ENCODE measurements at regions of chr10 and their contacts with region 1.

Region 1: GRCh38 chr10:71608819-71609768 is 110.5 kb downstream of the C10orf105 start:
- DNase-seq: peak; percentile 61
- H3K4me3 Mint-ChIP-seq: no peak overlapping the region
- H3K27ac Mint-ChIP-seq: no peak overlapping the region
- H3K4me1 Mint-ChIP-seq: peaks cover 6% of the 10 kb centered on the region
- H3K27me3 Mint-ChIP-seq: peaks cover 57% of the 10 kb centered on the region
- CTCF ChIP-seq: peak; percentile 78

Region 2: GRCh38 chr10:71620642-71621041 is 11.5 kb after region 1 on chr10:
- CTCF ChIA-PET with region 1: interaction called, 14 read pairs
- POLR2A ChIA-PET with region 1: no interaction called
- intact Hi-C with region 1: no loop called
- DNase-seq: no peak
- H3K4me3 Mint-ChIP-seq: no peak overlapping the region
- H3K27ac Mint-ChIP-seq: no peak overlapping the region
- H3K4me1 Mint-ChIP-seq: no peaks in the 10 kb centered on the region
- H3K27me3 Mint-ChIP-seq: no peaks in the 10 kb centered on the region
- CTCF ChIP-seq: no peak

Region 3: DNA sequence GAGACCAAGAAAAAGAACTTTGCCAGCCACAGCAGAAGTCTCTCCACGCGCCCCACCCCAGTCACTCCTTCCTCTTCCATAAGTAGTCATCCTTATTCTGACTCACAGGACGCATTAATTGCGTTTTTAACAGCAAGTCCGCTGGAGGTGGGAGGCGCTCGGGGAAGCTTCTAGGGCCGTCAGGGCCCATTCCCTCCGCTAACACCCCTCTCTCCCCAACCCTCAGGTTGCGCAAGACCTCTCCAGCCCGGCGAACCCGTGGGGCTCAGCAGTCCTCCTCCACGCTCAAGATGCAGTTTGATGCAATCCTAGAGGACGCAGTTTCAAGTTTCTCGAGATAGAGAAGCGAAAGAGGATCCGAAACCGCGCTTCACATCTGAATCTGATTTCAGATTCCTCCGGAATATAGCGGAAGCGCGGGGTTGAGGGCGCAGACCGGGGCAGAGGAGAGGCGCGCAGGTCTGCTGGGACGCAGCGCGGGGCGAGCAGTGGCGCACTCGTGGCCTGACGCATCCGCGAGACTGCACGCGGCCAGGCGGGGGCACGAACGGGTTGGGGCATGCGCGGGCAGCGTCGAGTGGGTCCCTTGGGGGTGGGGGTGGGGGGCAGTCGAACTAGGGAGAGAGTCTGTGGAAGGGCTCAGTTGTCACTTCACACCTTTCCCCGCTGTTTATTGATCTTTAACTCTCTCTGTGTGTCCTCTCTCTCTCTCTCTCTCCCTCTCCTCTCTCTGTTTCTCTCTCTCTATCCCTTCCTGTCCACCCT is 279.7 kb after region 1 on chr10:
- CTCF ChIA-PET with region 1: no interaction called
- POLR2A ChIA-PET with region 1: no interaction called
- intact Hi-C with region 1: no loop called
- DNase-seq: peak; percentile 83
- H3K4me3 Mint-ChIP-seq: peak overlapping the region; percentile 96
- H3K27ac Mint-ChIP-seq: peak overlapping the region; percentile 96
- H3K4me1 Mint-ChIP-seq: peaks cover 11% of the 10 kb centered on the region
- H3K27me3 Mint-ChIP-seq: no peaks in the 10 kb centered on the region
- CTCF ChIP-seq: no peak